Head of caudate nucleus (tissue), 42 donors: ENCODE measurements at regions of chr13 and their contacts with region 1.

Region 1: DNA sequence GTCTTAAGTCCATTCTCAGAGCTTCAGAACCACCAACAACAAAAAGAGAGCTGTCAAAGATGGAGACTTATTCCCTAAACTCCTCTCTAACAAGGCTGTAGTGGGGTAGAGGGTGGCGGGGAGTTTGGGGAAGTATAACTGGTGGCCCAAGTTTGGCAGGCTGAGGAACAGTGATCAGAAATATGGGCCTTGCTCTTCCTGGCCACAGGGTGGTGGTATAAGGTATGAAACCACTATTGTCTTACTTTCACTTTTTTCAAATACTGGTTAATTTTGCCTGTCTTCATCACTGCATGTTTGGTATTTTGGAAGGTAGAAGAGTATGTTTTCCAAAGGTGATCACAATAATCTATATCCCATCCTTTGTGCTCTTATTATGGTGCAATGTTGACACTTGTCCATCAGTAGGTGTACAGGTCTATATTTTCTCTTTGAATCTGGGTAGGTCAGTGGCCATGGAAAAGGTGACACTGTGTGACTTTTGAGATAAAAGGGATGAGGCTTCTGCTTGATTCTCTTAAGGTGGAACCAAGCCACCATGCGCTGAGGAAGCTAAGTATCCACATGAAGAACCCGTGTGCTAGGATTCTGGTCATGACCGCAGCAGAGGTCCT is 23.2 kb upstream of the GPC5 start:
- DNase-seq: peak in 9 of 42 donors; percentile 4 to 50 (median 15)

Region 2: DNA sequence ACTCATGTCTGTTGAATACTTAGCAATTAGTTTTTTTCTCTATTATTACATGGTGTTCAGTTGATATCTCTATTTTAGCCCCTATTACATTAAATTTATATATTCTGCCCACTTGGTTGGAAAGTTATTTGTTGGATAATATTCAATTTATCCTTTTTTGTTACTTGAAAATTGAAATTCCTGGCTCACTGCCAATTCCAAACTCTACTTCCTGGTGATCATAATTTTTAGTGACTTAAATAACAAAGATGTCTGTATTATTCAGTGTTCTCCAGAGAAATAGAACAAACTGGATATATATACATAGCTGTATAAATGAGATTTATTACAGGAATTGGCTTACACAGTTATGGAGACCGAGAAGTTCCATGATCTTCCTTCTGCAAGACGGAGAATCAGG is 116.8 kb after region 1 on chr13:
- intact Hi-C with region 1: no loop called
- DNase-seq: no peak

Region 3: GRCh38 chr13:91722267-91722884 is 347.2 kb after region 1 on chr13:
- intact Hi-C with region 1: loop called (anchors 10 kb)
- DNase-seq: peak in 3 of 42 donors; percentile 13 to 54 (median 25)